Heart right ventricle (tissue), 16 donors: ENCODE measurements at regions of chr9 and their contacts with region 1.

Region 1: GRCh38 chr9:134525841-134526595 is 115.6 kb upstream of the COL5A1 start:
- DNase-seq: peak; percentile 55 to 73
- ATAC-seq: peak; percentile 71 to 83 (median 80)
- H3K4me3 ChIP-seq: peak overlapping the region in 7 of 10 donors; percentile 0 to 27 (median 11)
- H3K27ac ChIP-seq: peak overlapping the region; percentile 58 to 78 (median 70)
- H3K4me1 ChIP-seq: peaks cover 0 to 7% (median 0%) of the 10 kb centered on the region in 9 donors
- H3K27me3 ChIP-seq: peaks cover 0 to 42% (median 14%) of the 10 kb centered on the region in 7 donors
- CTCF ChIP-seq: peak in 2 of 9 donors; percentile 11 to 18

Region 2: DNA sequence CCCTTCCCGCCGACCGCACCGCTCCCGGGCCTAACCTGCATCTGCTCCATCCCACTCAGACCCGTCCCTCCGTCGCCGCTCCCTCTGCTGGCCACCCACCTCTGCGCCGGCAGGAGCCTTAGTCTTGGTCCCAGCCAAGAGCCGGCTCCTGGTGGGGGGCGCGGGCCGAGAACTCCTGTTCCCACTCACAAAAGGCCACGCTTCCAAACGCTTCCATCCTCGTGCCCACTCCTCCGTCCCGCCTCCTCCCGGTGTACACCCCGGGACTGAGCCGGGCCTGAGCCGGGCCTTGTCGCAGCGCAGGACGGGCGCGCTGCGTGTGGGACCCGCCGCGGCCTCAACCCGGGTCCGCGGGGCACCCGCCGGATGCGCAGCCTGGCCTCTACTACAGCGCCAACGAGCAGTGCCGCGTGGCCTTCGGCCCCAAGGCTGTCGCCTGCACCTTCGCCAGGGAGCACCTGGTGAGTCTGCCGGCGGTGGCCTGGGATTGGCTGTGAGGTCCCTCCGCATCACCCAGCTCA is 1096.3 kb before region 1 on chr9:
- intact Hi-C with region 1: loop called in 1 of 10 experiments (anchors 5 kb)
- DNase-seq: peak; percentile 23 to 31
- ATAC-seq: peak in 3 of 8 donors; percentile 45 to 60 (median 51)
- H3K4me3 ChIP-seq: no peak overlapping the region
- H3K27ac ChIP-seq: no peak overlapping the region
- H3K4me1 ChIP-seq: peaks cover 0 to 5% (median 3%) of the 10 kb centered on the region in 9 donors
- H3K27me3 ChIP-seq: peaks cover 5 to 44% (median 41%) of the 10 kb centered on the region in 7 donors
- CTCF ChIP-seq: peak in 5 of 9 donors; percentile 17 to 38 (median 32)

Region 3: DNA sequence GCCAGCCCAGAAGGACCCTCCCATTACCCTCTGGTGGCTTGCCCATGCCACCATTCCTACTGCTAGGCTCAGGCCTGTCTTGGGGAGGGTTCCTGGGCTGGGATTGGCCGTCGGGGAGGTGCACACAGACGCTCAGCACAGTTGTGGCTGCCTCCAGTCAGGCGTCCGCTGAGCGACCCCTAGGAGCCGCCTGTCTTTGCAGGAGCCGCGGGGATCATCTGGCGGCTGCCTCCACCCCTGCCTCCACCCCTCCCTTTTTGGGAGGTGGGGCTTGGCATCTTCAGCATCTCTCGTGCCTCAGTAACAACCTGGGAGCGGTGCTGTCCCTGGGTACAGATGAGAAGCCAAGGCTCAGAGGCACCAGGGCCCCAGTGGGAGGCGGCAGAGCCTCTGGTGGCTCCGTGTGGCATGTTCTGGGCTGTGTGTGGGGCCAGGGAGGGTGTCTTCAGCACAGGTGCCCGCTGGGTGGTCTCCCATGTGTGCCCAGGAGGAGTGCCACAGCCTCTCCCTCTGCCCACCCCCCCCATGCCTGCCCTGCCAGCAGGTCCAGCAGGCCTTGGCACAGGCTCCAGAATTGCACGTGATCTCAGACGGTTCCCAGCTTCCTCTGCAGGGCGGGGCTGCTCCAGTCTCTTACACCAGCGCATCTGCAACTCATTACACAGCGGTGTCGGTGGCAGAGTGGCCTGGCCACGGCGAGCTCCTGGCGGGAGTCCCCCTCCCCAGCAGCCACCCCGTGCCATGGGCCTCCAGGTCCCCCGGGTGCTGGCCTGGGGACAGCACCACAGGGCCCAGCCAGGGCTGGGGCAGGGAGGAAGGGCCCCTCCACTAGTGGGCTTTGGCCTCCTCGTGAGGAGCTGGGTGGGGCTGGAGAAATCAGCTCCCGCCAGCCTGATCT is 160.0 kb before region 1 on chr9:
- intact Hi-C with region 1: no loop called
- DNase-seq: peak; percentile 89 to 92
- ATAC-seq: peak; percentile 82 to 90 (median 87)
- H3K4me3 ChIP-seq: peak overlapping the region in 7 of 10 donors; percentile 3 to 45 (median 24)
- H3K27ac ChIP-seq: peak overlapping the region; percentile 11 to 94 (median 73)
- H3K4me1 ChIP-seq: peaks cover 59 to 91% (median 80%) of the 10 kb centered on the region in 9 donors
- H3K27me3 ChIP-seq: no peaks in the 10 kb centered on the region
- CTCF ChIP-seq: peak in 4 of 9 donors; percentile 15 to 42 (median 36)

Region 4: DNA sequence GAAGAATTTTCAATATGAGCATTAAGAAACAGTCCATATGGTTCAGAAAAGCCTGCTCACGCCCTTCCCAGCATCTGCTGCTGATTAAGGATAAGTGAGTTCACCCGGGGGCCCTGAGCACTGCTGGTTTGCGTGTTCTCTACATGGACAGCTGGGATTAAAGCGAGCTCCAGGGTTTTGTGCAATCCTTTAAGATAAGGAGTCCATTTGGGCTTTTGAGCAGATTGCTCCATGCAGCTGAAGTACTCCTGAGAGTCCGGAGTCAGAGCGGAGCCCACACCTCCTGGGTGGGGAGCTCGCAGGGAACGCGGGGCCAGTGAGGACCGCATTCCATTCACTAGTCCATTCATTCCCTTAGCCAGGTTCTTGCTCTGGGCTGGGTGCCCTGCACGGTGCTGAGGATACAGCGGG is 33.7 kb before region 1 on chr9:
- intact Hi-C with region 1: loop called in 1 of 10 experiments (anchors 5 kb)
- DNase-seq: peak; percentile 54 to 63
- ATAC-seq: peak; percentile 68 to 91 (median 78)
- H3K4me3 ChIP-seq: no peak overlapping the region
- H3K27ac ChIP-seq: peak overlapping the region in 5 of 10 donors; percentile 36 to 58 (median 44)
- H3K4me1 ChIP-seq: peaks cover 0 to 29% (median 4%) of the 10 kb centered on the region in 9 donors
- H3K27me3 ChIP-seq: peaks cover 0 to 53% (median 20%) of the 10 kb centered on the region in 7 donors
- CTCF ChIP-seq: no peak